ENCODE measurements at regions of chr21 and their contacts with region 1.

Region 1: DNA sequence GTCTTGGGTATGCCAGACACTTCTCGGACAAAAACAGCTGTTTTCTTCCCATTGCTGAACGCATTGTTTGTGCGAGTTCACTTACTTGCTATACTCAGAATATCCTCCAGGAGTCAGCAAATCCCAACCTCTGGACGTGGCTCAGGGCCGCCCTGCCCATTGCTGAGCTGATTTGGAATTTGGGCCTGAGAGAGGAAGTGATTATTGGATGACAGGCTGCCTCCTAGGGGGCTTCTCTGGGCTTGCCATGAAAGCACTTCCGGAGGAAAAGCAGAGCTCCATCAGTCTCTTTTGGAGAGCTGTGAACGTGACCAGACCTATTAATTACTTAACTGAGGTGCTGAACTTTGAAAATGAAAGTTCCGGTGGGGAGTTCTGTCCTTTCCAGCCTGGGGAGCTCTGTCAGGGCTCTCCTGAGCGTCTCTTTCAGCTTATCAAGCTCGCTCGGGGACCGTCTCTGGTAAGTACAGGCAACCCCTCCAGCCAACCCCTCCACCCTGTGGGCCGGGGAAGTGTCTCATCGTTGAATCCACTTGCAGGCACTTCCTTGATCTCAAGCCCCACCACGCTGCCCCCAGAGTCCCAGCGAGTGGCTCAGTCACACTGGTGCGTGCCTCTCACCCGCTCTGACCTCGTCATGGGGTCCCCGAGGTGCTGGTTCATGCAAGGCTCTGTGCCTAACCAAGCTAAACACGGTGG is 76.9 kb downstream of the CLIC6 start:
- DNase-seq: peak; percentile 70
- H3K4me3 ChIP-seq: no peak overlapping the region
- H3K27ac ChIP-seq: no peak overlapping the region
- H3K4me1 ChIP-seq: no peaks in the 10 kb centered on the region
- H3K27me3 ChIP-seq: no peaks in the 10 kb centered on the region; a peak in 1 of 7 replicates
- CTCF ChIP-seq: peak; percentile 60 to 96 (median 89)
- EP300 ChIP-seq: no peak
- POLR2A ChIP-seq: no peak
- RAD21 ChIP-seq: peak; percentile 98 to 99

Region 2: GRCh38 chr21:34722684-34723300 is 22.9 kb before region 1 on chr21:
- CTCF ChIA-PET with region 1: interaction called, 15 read pairs
- POLR2A ChIA-PET with region 1: no interaction called
- DNase-seq: peak in 1 of 2 experiments; percentile 78
- H3K4me3 ChIP-seq: no peak overlapping the region
- H3K27ac ChIP-seq: no peak overlapping the region
- H3K4me1 ChIP-seq: no peaks in the 10 kb centered on the region
- H3K27me3 ChIP-seq: no peaks in the 10 kb centered on the region
- CTCF ChIP-seq: peak; percentile 66 to 93 (median 91)
- EP300 ChIP-seq: no peak
- POLR2A ChIP-seq: no peak
- RAD21 ChIP-seq: peak; percentile 61 to 70

Region 3: GRCh38 chr21:34762761-34763160 is 17.1 kb after region 1 on chr21:
- CTCF ChIA-PET with region 1: interaction called, 20 read pairs
- POLR2A ChIA-PET with region 1: no interaction called
- DNase-seq: no peak
- H3K4me3 ChIP-seq: no peak overlapping the region
- H3K27ac ChIP-seq: no peak overlapping the region
- H3K4me1 ChIP-seq: no peaks in the 10 kb centered on the region
- H3K27me3 ChIP-seq: no peaks in the 10 kb centered on the region
- CTCF ChIP-seq: peak in 1 of 3 experiments; percentile 9; a peak in 1 of 4 replicates
- EP300 ChIP-seq: no peak
- POLR2A ChIP-seq: no peak
- RAD21 ChIP-seq: no peak

Region 4: GRCh38 chr21:34775793-34776192 is 30.1 kb after region 1 on chr21:
- CTCF ChIA-PET with region 1: interaction called, 11 read pairs
- POLR2A ChIA-PET with region 1: no interaction called
- DNase-seq: no peak
- H3K4me3 ChIP-seq: no peak overlapping the region
- H3K27ac ChIP-seq: no peak overlapping the region
- H3K4me1 ChIP-seq: no peaks in the 10 kb centered on the region
- H3K27me3 ChIP-seq: no peaks in the 10 kb centered on the region
- CTCF ChIP-seq: no peak
- EP300 ChIP-seq: no peak
- POLR2A ChIP-seq: no peak
- RAD21 ChIP-seq: no peak

Region 5: GRCh38 chr21:34795548-34796180 is 50.0 kb after region 1 on chr21:
- CTCF ChIA-PET with region 1: interaction called, 20 read pairs
- POLR2A ChIA-PET with region 1: no interaction called
- DNase-seq: no peak
- H3K4me3 ChIP-seq: no peak overlapping the region
- H3K27ac ChIP-seq: no peak overlapping the region
- H3K4me1 ChIP-seq: peaks cover 0 to 3% (median under 1%) of the 10 kb centered on the region in 4 experiments; a peak in 3 of 7 replicates
- H3K27me3 ChIP-seq: no peaks in the 10 kb centered on the region
- CTCF ChIP-seq: no peak
- EP300 ChIP-seq: no peak
- POLR2A ChIP-seq: no peak
- RAD21 ChIP-seq: no peak

Region 6: DNA sequence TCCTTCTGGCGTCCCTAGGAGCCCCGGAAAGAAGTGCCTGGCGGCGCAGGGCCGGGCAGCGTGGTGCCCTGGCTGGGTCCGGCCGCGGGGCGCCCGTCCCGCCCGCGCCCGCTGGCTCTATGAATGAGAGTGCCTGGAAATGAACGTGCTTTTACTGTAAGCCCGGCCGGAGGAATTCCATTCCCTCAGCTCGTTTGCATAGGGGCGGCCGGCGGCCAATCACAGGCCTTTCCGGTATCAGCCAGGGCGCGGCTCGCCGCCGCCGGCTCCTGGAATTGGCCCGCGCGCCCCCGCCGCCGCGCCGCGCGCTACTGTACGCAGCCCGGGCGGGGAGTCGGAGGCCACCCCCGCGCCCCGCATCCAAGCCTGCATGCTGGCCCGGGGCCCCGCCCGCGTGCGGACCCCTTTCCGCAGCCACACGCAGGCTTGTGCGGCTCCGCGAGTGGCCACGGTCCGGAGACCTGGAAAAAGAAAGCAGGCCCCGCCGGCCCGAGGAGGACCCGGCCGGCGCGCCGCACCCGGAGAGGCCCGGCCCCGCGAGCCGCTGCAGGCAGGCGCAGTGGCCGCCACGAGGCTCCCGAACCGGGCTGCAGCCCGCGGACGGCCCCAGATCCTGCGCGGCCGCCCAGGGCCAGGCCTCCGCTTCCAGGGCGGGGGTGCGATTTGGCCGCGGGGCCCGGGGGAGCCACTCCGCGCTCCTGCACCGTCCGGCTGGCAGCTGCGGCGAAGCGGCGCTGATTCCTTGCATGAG is 143.0 kb after region 1 on chr21:
- CTCF ChIA-PET with region 1: interaction called, 22 read pairs
- POLR2A ChIA-PET with region 1: no interaction called
- DNase-seq: peak; percentile 79 to 86
- H3K4me3 ChIP-seq: peak overlapping the region; percentile 43 to 73 (median 56)
- H3K27ac ChIP-seq: no peak overlapping the region
- H3K4me1 ChIP-seq: peaks cover 3 to 15% (median 9%) of the 10 kb centered on the region in 4 experiments; a peak in 6 of 7 replicates
- H3K27me3 ChIP-seq: peaks cover 37 to 90% (median 74%) of the 10 kb centered on the region in 4 experiments
- CTCF ChIP-seq: no peak
- EP300 ChIP-seq: no peak
- POLR2A ChIP-seq: peak in 1 of 2 experiments; percentile 68; a peak in 2 of 3 replicates
- RAD21 ChIP-seq: peak in 1 of 2 experiments; percentile 7; a peak in 1 of 4 replicates

Region 7: DNA sequence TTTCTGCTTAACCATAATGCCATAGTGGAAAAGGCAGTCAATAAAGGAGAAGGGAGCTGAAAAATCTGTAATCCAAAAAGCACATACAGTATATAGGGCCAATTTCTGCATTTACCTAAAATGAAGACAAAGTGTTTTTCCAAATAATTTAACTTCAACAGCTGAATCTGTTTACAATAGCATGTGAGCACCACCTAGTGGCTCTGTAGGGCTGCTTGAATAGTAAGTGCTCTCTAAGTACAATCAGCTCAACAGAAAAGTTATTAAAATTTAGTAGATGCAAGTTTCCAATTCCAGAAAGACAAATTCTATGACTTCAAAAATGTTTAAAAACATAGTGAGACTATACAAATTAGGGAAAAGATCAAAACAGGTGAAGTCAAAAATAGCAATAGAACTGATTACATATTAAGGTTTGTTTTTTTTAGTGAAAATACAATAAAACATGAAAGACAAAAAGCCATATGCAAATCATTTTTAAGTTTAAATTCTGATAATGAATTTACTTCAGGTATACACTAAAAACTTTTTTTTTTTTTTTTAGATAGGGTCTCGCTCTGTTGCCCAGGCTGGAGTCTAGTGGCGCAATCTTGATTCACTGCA is 1094.6 kb after region 1 on chr21:
- CTCF ChIA-PET with region 1: interaction called, 19 read pairs
- POLR2A ChIA-PET with region 1: no interaction called
- DNase-seq: no peak
- H3K4me3 ChIP-seq: no peak overlapping the region
- H3K27ac ChIP-seq: no peak overlapping the region
- H3K4me1 ChIP-seq: no peaks in the 10 kb centered on the region
- H3K27me3 ChIP-seq: no peaks in the 10 kb centered on the region
- CTCF ChIP-seq: peak in 2 of 3 experiments; percentile 59 to 67; a peak in 3 of 4 replicates
- EP300 ChIP-seq: no peak
- POLR2A ChIP-seq: no peak
- RAD21 ChIP-seq: peak; percentile 92 to 94

Measured in H1 (cell line).